Posterior vena cava (tissue), 2 donors: ENCODE measurements at regions of chr10 and their contacts with region 1.

Region 1: GRCh38 chr10:86899670-86900276 is 57.6 kb downstream of the MMRN2 start:
- DNase-seq: no peak

Region 2: GRCh38 chr10:86693721-86694369 is 205.9 kb before region 1 on chr10:
- intact Hi-C with region 1: loop called (anchors 5 kb)
- DNase-seq: no peak